Gastrocnemius medialis (tissue), 4 donors: ENCODE measurements at regions of chr1 and their contacts with region 1.

Region 1: DNA sequence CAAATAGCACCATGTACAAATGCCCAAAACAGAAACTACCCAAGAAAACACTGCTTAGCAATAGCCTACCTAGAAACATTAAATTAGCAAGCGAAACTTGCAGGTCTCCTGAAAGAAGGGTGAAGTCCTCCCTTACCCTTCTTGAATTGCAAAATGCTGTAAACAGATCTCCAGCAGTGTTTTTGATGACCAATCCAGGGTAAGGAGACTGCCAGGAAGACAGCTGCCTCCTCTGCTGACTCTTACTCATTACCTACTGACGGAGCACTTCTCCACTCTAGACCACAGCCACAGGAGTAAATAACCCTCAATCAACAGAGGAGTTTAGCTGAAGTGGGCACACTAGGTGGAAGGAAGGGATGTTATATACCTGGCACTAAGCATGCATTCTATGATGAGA is 32.2 kb upstream of the GADD45A start:
- DNase-seq: peak; percentile 86 to 88
- ATAC-seq: peak; percentile 100
- H3K4me3 ChIP-seq: peak overlapping the region in 1 of 4 donors; percentile 26
- H3K27ac ChIP-seq: peak overlapping the region; percentile 79 to 87 (median 82)
- H3K4me1 ChIP-seq: peaks cover 13 to 17% of the 10 kb centered on the region in 2 donors
- H3K27me3 ChIP-seq: no peaks in the 10 kb centered on the region
- CTCF ChIP-seq: peak in 1 of 5 experiments; percentile 17
- POLR2A ChIP-seq: peak; percentile 61 to 83

Region 2: DNA sequence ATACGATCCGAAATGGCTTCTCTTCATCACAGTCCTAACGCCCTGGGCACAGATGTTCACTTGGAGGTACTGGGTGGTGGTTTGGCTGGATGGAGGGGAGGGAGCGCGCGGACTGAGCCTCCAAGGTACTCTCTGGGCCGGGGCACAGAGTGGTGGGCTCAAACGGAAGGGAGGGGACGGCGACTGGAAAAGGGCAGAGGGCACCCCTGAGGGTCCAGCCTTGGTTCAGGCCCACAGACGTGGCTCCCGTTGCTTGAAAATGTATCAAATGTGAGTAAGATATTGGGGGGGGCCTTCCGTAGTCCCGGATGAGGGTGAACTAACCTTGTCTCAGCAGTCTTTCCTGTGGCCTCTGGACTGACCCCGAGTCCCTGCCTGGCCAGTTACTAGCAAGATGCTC is 344.7 kb before region 1 on chr1:
- in situ Hi-C with region 1: no loop called
- intact Hi-C with region 1: no loop called
- DNase-seq: no peak
- ATAC-seq: peak; percentile 20 to 49
- H3K4me3 ChIP-seq: peak overlapping the region; percentile 57 to 69 (median 65)
- H3K27ac ChIP-seq: peak overlapping the region in 3 of 4 donors; percentile 67 to 76 (median 70)
- H3K4me1 ChIP-seq: peaks cover 0 to 13% of the 10 kb centered on the region in 2 donors
- H3K27me3 ChIP-seq: peaks cover 0 to 8% (median 0%) of the 10 kb centered on the region in 3 donors
- CTCF ChIP-seq: no peak
- POLR2A ChIP-seq: no peak

Region 3: DNA sequence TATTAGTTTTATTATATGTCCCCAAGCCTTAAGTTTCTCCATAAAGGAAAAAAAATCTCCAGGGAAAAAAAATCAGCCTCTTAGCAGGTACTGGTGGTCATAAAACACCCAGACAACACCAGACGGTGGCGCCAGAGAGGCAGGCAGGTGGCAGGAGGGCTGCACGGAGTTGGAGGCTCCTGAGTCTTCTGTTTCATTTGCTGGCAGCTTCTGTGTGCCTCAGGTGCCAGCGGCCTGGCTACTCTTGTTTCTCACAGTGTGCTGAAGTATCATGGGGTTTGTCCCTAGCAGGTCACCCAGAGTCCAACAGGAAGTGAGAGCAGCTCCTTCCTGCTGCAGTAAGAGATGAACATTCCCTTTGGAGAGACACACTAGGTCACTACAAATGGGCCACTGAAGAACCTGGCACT is 91.1 kb before region 1 on chr1:
- in situ Hi-C with region 1: no loop called
- intact Hi-C with region 1: loop called (anchors 1 kb)
- DNase-seq: peak; percentile 94 to 99
- ATAC-seq: peak; percentile 90 to 91
- H3K4me3 ChIP-seq: peak overlapping the region in 2 of 4 donors; percentile 0 to 19
- H3K27ac ChIP-seq: peak overlapping the region; percentile 88 to 94 (median 90)
- H3K4me1 ChIP-seq: peaks cover 27 to 48% of the 10 kb centered on the region in 2 donors
- H3K27me3 ChIP-seq: no peaks in the 10 kb centered on the region
- CTCF ChIP-seq: peak; percentile 90 to 95 (median 95)
- POLR2A ChIP-seq: peak in 1 of 2 donors; percentile 38

Region 4: GRCh38 chr1:67570473-67571143 is 82.2 kb before region 1 on chr1:
- in situ Hi-C with region 1: loop called in 1 of 4 experiments (anchors 5 kb)
- intact Hi-C with region 1: no loop called
- DNase-seq: no peak
- ATAC-seq: peak in 1 of 2 donors; percentile 7
- H3K4me3 ChIP-seq: no peak overlapping the region
- H3K27ac ChIP-seq: peak overlapping the region; percentile 90 to 96 (median 92)
- H3K4me1 ChIP-seq: peaks cover 27 to 44% of the 10 kb centered on the region in 2 donors
- H3K27me3 ChIP-seq: no peaks in the 10 kb centered on the region
- CTCF ChIP-seq: no peak
- POLR2A ChIP-seq: no peak

Region 5: GRCh38 chr1:67618285-67619018 is 34.3 kb before region 1 on chr1:
- in situ Hi-C with region 1: no loop called
- intact Hi-C with region 1: loop called (anchors 5 kb)
- DNase-seq: peak; percentile 63 to 74
- ATAC-seq: peak; percentile 77 to 83
- H3K4me3 ChIP-seq: peak overlapping the region in 2 of 4 donors; percentile 16 to 18
- H3K27ac ChIP-seq: peak overlapping the region; percentile 53 to 84 (median 74)
- H3K4me1 ChIP-seq: peaks cover 25 to 30% of the 10 kb centered on the region in 2 donors
- H3K27me3 ChIP-seq: no peaks in the 10 kb centered on the region
- CTCF ChIP-seq: no peak
- POLR2A ChIP-seq: no peak